ENCODE measurements at regions of chr11 and their contacts with region 1.

Region 1: GRCh38 chr11:66258473-66258893 is 10.0 kb upstream of the RAB1B start:
- DNase-seq: no peak
- ATAC-seq: no peak
- H3K4me3 ChIP-seq: peak overlapping the region; percentile 79 to 100 (median 95)
- H3K27ac ChIP-seq: peak overlapping the region in 8 of 10 donors; percentile 80 to 90 (median 86)
- H3K4me1 ChIP-seq: peaks cover 0 to 19% (median 13%) of the 10 kb centered on the region in 9 donors
- H3K27me3 ChIP-seq: peaks cover 0 to 17% (median 0%) of the 10 kb centered on the region in 7 donors
- CTCF ChIP-seq: peak in 5 of 9 donors; percentile 9 to 43 (median 22)

Region 2: DNA sequence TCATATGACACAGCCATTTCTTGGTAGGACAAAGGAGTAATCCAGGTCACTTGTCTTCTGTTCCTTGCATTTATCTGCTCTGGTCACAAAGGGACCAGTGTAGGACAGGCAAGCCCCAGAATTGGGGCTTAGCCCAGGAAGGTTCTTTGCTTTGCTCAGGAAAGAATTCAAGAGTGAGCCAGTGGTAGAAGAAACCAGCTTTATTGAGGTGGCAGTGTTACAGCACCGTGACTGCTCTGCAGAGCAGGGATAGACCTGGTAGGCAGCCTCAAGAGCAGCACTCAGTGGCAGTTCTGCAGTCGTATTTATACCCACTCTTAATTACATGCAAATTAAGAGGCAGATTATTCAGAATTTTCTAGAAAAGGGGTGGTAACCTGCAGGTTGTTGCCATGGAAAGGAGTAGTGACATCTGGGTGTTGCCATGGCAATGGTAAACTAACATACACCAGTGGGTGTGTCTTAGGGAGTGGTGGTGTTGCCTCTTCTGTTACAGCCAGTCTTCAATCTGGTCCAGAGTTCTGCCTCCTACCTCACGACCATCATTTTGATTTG is 74.9 kb before region 1 on chr11:
- intact Hi-C with region 1: loop called in 1 of 10 experiments (anchors 2 kb)
- DNase-seq: no peak
- ATAC-seq: peak in 1 of 8 donors; percentile 27
- H3K4me3 ChIP-seq: no peak overlapping the region
- H3K27ac ChIP-seq: no peak overlapping the region
- H3K4me1 ChIP-seq: peaks cover 0 to 13% (median 0%) of the 10 kb centered on the region in 9 donors
- H3K27me3 ChIP-seq: no peaks in the 10 kb centered on the region
- CTCF ChIP-seq: no peak

Region 3: GRCh38 chr11:66288671-66289547 is 30.4 kb after region 1 on chr11 and contains the start of gene YIF1A:
- intact Hi-C with region 1: no loop called
- DNase-seq: peak; percentile 98 to 99
- ATAC-seq: peak; percentile 92 to 98 (median 97)
- H3K4me3 ChIP-seq: peak within 1 kb of the TSS; percentile 63 to 98 (median 82)
- H3K27ac ChIP-seq: peak within 1 kb of the TSS; percentile 82 to 98 (median 94)
- H3K4me1 ChIP-seq: peaks cover 5 to 55% (median 39%) of the 10 kb centered on the region in 9 donors
- H3K27me3 ChIP-seq: peaks cover 13 to 34% (median 22%) of the 10 kb centered on the region in 7 donors
- CTCF ChIP-seq: peak in 3 of 9 donors; percentile 28 to 45 (median 31)
- total RNA-seq, gene YIF1A: 38.3 to 75.0 (median 51.9) TPM

Region 4: DNA sequence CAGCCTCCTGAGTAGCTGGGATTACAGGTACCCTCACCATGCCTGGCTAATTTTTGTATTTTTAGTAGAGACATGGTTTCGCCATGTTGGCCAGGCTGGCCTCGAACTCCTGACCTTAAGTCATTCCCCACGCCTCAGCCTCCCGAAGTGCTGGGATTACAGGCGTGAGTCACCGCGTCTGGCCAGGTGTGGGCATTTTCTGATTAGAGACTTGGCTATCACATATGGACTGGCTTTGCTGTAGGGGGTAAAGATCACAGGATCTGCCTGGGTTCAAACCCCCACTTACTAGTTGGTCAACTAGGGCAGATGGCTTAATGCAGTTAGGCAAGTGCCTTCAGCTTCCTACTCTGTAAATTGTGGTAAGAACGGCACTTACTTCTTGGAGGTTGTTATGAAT is 51.8 kb after region 1 on chr11:
- intact Hi-C with region 1: no loop called
- DNase-seq: no peak
- ATAC-seq: no peak
- H3K4me3 ChIP-seq: no peak overlapping the region
- H3K27ac ChIP-seq: no peak overlapping the region
- H3K4me1 ChIP-seq: peaks cover 0 to 23% (median 14%) of the 10 kb centered on the region in 9 donors
- H3K27me3 ChIP-seq: no peaks in the 10 kb centered on the region
- CTCF ChIP-seq: no peak

Measured in heart right ventricle (tissue), 16 donors.